ENCODE measurements at regions of chr7 and their contacts with region 1.

Region 1: GRCh38 chr7:78020136-78020873 is 221.7 kb downstream of the PHTF2 start:
- DNase-seq: peak in 5 of 10 donors; percentile 41 to 70 (median 53)
- H3K4me3 ChIP-seq: peak overlapping the region; percentile 37 to 74 (median 59)
- H3K27ac ChIP-seq: peak overlapping the region; percentile 61 to 96 (median 89)
- H3K27me3 ChIP-seq: no peaks in the 10 kb centered on the region
- CTCF ChIP-seq: peak; percentile 48 to 90 (median 84)

Region 2: DNA sequence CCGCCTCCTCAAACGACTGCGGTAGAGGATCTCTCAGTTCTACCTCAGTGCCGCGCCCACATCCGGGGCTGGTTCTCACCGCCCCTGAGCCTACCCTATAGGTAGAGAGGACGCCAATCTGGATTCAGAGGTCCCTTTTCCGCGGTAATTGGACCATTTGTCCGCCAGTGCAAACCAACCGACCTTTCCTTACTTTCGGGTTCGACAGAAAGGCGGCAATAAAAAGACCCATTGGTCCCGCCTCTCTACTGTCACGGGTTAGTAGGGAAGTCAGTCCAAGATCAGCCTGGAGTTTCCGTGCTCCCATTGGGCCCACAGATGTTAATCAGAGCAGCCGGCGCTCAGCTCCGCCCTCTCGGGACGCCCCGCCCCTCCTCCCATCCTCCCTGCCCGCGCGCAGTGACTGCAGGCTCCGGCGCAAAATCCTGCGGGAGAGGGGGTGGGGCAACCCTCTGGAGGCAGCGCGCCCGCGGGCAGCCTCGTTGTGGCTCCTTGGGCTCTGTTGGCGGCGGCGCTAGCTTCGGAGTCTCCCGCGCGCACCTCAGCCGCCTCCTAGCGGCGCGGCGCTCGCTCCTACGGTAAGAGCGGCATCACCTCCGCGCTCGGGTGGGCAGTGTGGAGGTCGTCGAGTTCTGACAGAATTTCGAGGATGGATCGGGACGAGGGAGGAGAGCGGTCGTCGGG is 221.8 kb before region 1 on chr7 and contains the starts of genes PHTF2 and TMEM60:
- intact Hi-C with region 1: loop called (anchors 2 to 10 kb)
- DNase-seq: peak; percentile 97 to 99 (median 99)
- H3K4me3 ChIP-seq: peak within 1 kb of the TSS; percentile 71 to 100 (median 95)
- H3K27ac ChIP-seq: peak within 1 kb of the TSS; percentile 55 to 97 (median 93)
- H3K27me3 ChIP-seq: no peaks in the 10 kb centered on the region
- CTCF ChIP-seq: peak in 55 of 56 donors; percentile 31 to 79 (median 60)
- total RNA-seq, gene PHTF2: 16.2 to 37.6 (median 25.4) TPM
- total RNA-seq, gene TMEM60: 5.2 to 17.8 (median 11.1) TPM

Region 3: GRCh38 chr7:78080811-78081210 is 60.5 kb after region 1 on chr7:
- intact Hi-C with region 1: loop called in 1 of 2 experiments (anchors 10 kb)
- DNase-seq: no peak
- H3K4me3 ChIP-seq: no peak overlapping the region
- H3K27ac ChIP-seq: peak overlapping the region in 33 of 59 donors; percentile 0 to 61 (median 27)
- H3K27me3 ChIP-seq: no peaks in the 10 kb centered on the region
- CTCF ChIP-seq: no peak

Region 4: DNA sequence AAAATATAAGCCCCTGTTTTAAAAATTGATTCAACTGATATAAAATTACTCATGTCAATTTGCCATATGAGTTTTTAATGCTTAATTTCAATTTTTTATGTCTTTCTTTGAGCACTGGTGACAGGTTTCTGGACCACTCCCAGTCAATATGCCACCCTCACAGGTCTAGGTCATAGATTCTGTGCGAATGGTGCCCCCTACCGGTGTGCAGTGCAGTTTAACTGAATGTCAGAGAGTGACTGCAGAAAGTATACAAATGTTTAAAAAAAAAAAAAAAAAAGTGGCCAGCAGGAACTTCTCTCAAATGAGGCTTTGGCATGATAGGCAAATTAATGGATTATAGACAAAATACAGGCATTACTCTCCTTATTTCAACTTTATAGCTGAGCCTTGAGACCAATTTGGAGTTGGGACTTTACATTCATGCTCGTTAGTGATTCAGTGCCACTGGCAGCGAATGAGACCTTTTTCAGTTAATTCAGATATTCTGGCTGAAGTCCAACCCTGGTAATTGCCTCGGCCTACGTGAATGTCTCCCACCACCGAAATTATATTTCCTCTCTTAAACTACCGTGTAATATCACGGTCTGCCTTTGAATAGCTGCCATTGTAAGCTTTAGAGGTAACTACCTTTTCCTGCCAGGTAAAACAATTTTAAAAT is 205.9 kb after region 1 on chr7:
- intact Hi-C with region 1: loop called in 1 of 2 experiments (anchors 5 kb)
- DNase-seq: peak in 6 of 10 donors; percentile 31 to 60 (median 52)
- H3K4me3 ChIP-seq: no peak overlapping the region
- H3K27ac ChIP-seq: no peak overlapping the region
- H3K27me3 ChIP-seq: no peaks in the 10 kb centered on the region
- CTCF ChIP-seq: peak in 54 of 56 donors; percentile 24 to 66 (median 50)

Region 5: DNA sequence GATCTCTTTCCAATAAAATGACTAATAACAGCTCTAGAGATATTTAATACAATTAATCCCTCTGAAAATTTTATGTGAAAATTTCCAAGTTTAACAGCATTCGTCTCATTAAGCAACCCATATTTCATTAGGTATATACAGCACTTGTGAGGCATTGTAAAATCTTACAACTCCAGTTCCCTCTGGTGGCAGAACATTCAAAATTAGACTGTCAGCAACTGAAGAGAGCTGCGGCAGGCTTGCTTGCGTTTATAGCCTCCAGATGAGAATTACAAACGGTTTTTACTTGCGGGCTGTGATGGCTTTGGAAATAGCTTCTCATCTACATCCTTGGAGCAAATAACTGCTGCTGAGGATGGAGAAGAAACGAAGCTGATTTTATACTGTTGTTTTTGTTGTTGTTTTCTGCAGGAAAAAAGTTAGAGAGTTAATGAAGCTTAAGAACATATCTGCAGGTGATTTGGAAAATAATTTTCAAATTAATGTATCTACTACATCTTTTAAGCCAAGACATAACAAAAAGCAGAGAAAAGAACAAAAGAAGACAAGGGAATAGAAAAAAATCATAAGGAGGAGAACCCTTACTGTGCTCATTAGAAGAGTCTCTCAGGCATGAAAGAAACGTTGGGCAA is 1261.9 kb after region 1 on chr7:
- intact Hi-C with region 1: loop called in 1 of 2 experiments (anchors 10 kb)
- DNase-seq: peak in 7 of 10 donors; percentile 25 to 62 (median 44)
- H3K4me3 ChIP-seq: peak overlapping the region in 16 of 59 donors; percentile 7 to 38 (median 27)
- H3K27ac ChIP-seq: peak overlapping the region in 16 of 59 donors; percentile 3 to 58 (median 24)
- H3K27me3 ChIP-seq: no peaks in the 10 kb centered on the region
- CTCF ChIP-seq: peak; percentile 29 to 77 (median 62)